Gastrocnemius medialis (tissue), 4 donors: ENCODE measurements at regions of chr17 and their contacts with region 1.

Region 1: GRCh38 chr17:3636154-3636907 is at the starts of genes CTNS and SHPK:
- DNase-seq: peak; percentile 96 to 97
- ATAC-seq: peak; percentile 89
- H3K4me3 ChIP-seq: peak within 1 kb of the TSS; percentile 82 to 100 (median 90)
- H3K27ac ChIP-seq: peak within 1 kb of the TSS; percentile 90 to 99 (median 96)
- H3K4me1 ChIP-seq: peaks cover 40 to 45% of the 10 kb centered on the region in 2 donors
- H3K27me3 ChIP-seq: no peaks in the 10 kb centered on the region
- CTCF ChIP-seq: peak in 1 of 5 experiments; percentile 17
- POLR2A ChIP-seq: peak; percentile 79 to 81
- total RNA-seq, gene CTNS: 15.0 to 141 (median 60.2) TPM
- total RNA-seq, gene SHPK: 4.1 to 4.7 (median 4.4) TPM

Region 2: GRCh38 chr17:3512505-3513171 is 123.7 kb before region 1 on chr17:
- in situ Hi-C with region 1: no loop called
- intact Hi-C with region 1: loop called (anchors 10 kb)
- DNase-seq: peak; percentile 79 to 84
- ATAC-seq: peak; percentile 97
- H3K4me3 ChIP-seq: peak overlapping the region; percentile 29 to 54 (median 36)
- H3K27ac ChIP-seq: peak overlapping the region; percentile 83 to 92 (median 88)
- H3K4me1 ChIP-seq: peaks cover 24 to 37% of the 10 kb centered on the region in 2 donors
- H3K27me3 ChIP-seq: no peaks in the 10 kb centered on the region
- CTCF ChIP-seq: no peak
- POLR2A ChIP-seq: peak; percentile 20 to 46

Region 3: GRCh38 chr17:3668279-3669085 is 32.2 kb after region 1 on chr17 and contains the starts of genes EMC6 and TAX1BP3:
- in situ Hi-C with region 1: no loop called
- intact Hi-C with region 1: loop called (anchors 1 kb)
- DNase-seq: peak; percentile 98
- ATAC-seq: peak; percentile 80 to 89
- H3K4me3 ChIP-seq: peak within 1 kb of the TSS; percentile 80 to 100 (median 95)
- H3K27ac ChIP-seq: peak within 1 kb of the TSS; percentile 93 to 97 (median 96)
- H3K4me1 ChIP-seq: peaks cover 36 to 37% of the 10 kb centered on the region in 2 donors
- H3K27me3 ChIP-seq: no peaks in the 10 kb centered on the region
- CTCF ChIP-seq: no peak
- POLR2A ChIP-seq: peak; percentile 95 to 99
- total RNA-seq, gene EMC6: 40.6 to 73.8 (median 54.5) TPM
- total RNA-seq, gene TAX1BP3: 24.1 to 45.1 (median 33.8) TPM

Region 4: GRCh38 chr17:3695723-3696411 is 59.5 kb after region 1 on chr17 and contains the start of gene P2RX5:
- in situ Hi-C with region 1: no loop called
- intact Hi-C with region 1: loop called (anchors 1 kb)
- DNase-seq: peak in 1 of 2 donors; percentile 36
- ATAC-seq: peak; percentile 48 to 49
- H3K4me3 ChIP-seq: peak within 1 kb of the TSS; percentile 69 to 85 (median 73)
- H3K27ac ChIP-seq: peak within 1 kb of the TSS; percentile 94 to 99 (median 96)
- H3K4me1 ChIP-seq: peaks cover 13 to 24% of the 10 kb centered on the region in 2 donors
- H3K27me3 ChIP-seq: peaks cover 0 to 4% (median 0%) of the 10 kb centered on the region in 3 donors
- CTCF ChIP-seq: no peak
- POLR2A ChIP-seq: no peak
- total RNA-seq, gene P2RX5: 12.3 to 52.9 (median 30.2) TPM

Region 5: DNA sequence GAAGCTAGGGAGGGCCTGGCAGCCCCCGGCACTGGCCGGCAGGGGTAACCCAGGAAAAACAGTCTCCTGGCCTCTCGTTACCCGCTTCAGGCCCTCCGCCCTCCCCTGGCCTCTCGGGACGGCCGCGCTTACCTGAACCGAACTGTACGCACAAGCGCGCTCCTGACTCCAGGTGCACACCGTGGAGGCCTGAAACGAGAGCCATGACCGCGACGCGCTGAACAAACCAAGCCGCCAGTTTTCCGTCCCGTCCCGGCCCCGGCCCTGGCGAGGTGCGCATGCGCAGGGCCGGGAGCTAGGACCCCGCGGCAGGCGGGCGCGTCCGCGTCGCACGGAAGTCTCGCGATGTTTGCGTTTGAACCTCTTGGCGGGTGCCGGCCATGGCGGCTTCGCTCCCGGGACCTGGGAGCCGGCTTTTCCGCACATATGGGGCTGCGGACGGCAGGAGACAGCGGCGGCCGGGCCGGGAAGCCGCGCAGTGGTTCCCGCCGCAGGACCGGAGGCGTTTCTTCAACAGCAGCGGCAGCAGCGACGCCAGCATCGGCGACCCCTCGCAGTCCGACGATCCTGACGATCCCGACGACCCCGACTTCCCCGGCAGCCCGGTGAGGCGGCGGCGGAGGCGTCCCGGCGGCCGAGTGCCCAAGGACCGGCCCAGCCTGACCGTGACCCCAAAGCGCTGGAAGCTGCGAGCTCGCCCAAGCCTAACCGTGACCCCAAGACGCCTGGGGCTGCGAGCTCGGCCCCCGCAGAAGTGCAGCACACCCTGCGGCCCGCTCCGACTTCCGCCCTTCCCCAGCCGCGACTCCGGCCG is 87.4 kb after region 1 on chr17 and contains the start of gene HASPIN:
- in situ Hi-C with region 1: no loop called
- intact Hi-C with region 1: loop called (anchors 2 kb)
- DNase-seq: peak; percentile 70 to 81
- ATAC-seq: peak; percentile 85 to 89
- H3K4me3 ChIP-seq: peak within 1 kb of the TSS; percentile 90 to 98 (median 92)
- H3K27ac ChIP-seq: peak within 1 kb of the TSS; percentile 92 to 96 (median 92)
- H3K4me1 ChIP-seq: peaks cover 16 to 26% of the 10 kb centered on the region in 2 donors
- H3K27me3 ChIP-seq: no peaks in the 10 kb centered on the region
- CTCF ChIP-seq: peak; percentile 30 to 57 (median 36)
- POLR2A ChIP-seq: peak; percentile 66
- total RNA-seq, gene HASPIN: 0.20 to 1.3 (median 0.24) TPM

Region 6: DNA sequence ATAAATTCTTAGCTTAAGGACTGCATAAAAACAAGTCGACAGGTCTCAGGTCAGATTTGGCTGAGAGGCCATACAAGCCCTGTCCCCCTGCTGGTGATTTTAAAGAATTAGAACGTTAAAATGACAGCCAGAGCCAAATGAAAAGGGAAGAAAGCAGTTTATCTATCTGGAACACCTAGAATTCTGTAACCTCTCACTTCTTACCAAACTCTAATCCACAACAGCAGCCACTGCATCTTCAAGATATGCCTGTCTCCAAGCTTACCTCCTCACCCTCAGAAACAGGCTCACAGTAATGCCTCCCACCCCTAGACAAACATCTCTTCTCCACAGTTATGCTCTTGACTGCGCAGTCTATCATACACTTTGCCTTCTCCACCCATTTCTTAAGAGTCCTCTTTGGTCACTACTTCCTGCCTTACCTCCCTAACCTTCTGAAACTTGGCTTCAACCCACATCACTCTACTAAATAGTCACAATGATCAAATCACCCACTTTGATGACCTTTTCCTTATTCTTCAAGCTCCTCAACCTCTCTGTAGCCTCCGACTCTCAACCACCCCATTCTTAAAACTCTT is 613.2 kb after region 1 on chr17:
- in situ Hi-C with region 1: no loop called
- intact Hi-C with region 1: no loop called
- DNase-seq: no peak
- ATAC-seq: peak in 1 of 2 donors; percentile 47
- H3K4me3 ChIP-seq: no peak overlapping the region
- H3K27ac ChIP-seq: peak overlapping the region; percentile 31 to 48 (median 36)
- H3K4me1 ChIP-seq: peaks cover 49 to 61% of the 10 kb centered on the region in 2 donors
- H3K27me3 ChIP-seq: no peaks in the 10 kb centered on the region
- CTCF ChIP-seq: peak in 4 of 5 experiments; percentile 29 to 55 (median 46)
- POLR2A ChIP-seq: no peak